ENCODE measurements at regions of chr13 and their contacts with region 1.

Region 1: GRCh38 chr13:19863323-19864023 is at the start of gene ZMYM5:
- DNase-seq: peak; percentile 97
- ATAC-seq: peak; percentile 88
- H3K4me3 ChIP-seq: peak within 1 kb of the TSS; percentile 71 to 95 (median 83)
- H3K4me3 Mint-ChIP-seq: peak within 1 kb of the TSS; percentile 93
- H3K27ac ChIP-seq: peak within 1 kb of the TSS; percentile 92 to 94
- H3K27ac Mint-ChIP-seq: peak within 1 kb of the TSS; percentile 97
- H3K4me1 ChIP-seq: peaks cover 22 to 26% of the 10 kb centered on the region in 2 donors
- H3K4me1 Mint-ChIP-seq: peaks cover 31% of the 10 kb centered on the region
- H3K27me3 ChIP-seq: no peaks in the 10 kb centered on the region
- H3K27me3 Mint-ChIP-seq: no peaks in the 10 kb centered on the region
- CTCF ChIP-seq: no peak
- total RNA-seq, gene ZMYM5: 23.0 and 26.8 TPM in 2 replicates

Region 2: GRCh38 chr13:19782049-19782726 is 81.3 kb before region 1 on chr13:
- CTCF ChIA-PET with region 1: interaction called, 7 read pairs
- POLR2A ChIA-PET with region 1: interaction called, 14 read pairs
- intact Hi-C with region 1: loop called (anchors 2 kb)
- DNase-seq: peak; percentile 71
- ATAC-seq: peak; percentile 62
- H3K4me3 ChIP-seq: peak overlapping the region; percentile 91 to 98 (median 98)
- H3K4me3 Mint-ChIP-seq: peak overlapping the region; percentile 98
- H3K27ac ChIP-seq: peak overlapping the region; percentile 88 to 92
- H3K27ac Mint-ChIP-seq: peak overlapping the region; percentile 100
- H3K4me1 ChIP-seq: peaks cover 5 to 10% of the 10 kb centered on the region in 2 donors
- H3K4me1 Mint-ChIP-seq: peaks cover 10% of the 10 kb centered on the region
- H3K27me3 ChIP-seq: no peaks in the 10 kb centered on the region
- H3K27me3 Mint-ChIP-seq: no peaks in the 10 kb centered on the region
- CTCF ChIP-seq: no peak

Region 3: GRCh38 chr13:19845758-19846157 is 17.7 kb before region 1 on chr13:
- CTCF ChIA-PET with region 1: no interaction called
- POLR2A ChIA-PET with region 1: interaction called, 12 read pairs
- intact Hi-C with region 1: no loop called
- DNase-seq: no peak
- ATAC-seq: no peak
- H3K4me3 ChIP-seq: no peak overlapping the region
- H3K4me3 Mint-ChIP-seq: no peak overlapping the region
- H3K27ac ChIP-seq: no peak overlapping the region
- H3K27ac Mint-ChIP-seq: no peak overlapping the region
- H3K4me1 ChIP-seq: no peaks in the 10 kb centered on the region
- H3K4me1 Mint-ChIP-seq: peaks cover 7% of the 10 kb centered on the region
- H3K27me3 ChIP-seq: no peaks in the 10 kb centered on the region
- H3K27me3 Mint-ChIP-seq: no peaks in the 10 kb centered on the region
- CTCF ChIP-seq: no peak

Region 4: GRCh38 chr13:19959831-19960652 is 96.6 kb after region 1 on chr13:
- CTCF ChIA-PET with region 1: interaction called, 8 read pairs
- POLR2A ChIA-PET with region 1: interaction called, 30 read pairs
- intact Hi-C with region 1: loop called (anchors 1 kb)
- DNase-seq: peak; percentile 92
- ATAC-seq: peak; percentile 44
- H3K4me3 ChIP-seq: peak overlapping the region; percentile 78 to 90 (median 85)
- H3K4me3 Mint-ChIP-seq: peak overlapping the region; percentile 99
- H3K27ac ChIP-seq: peak overlapping the region; percentile 90 to 96
- H3K27ac Mint-ChIP-seq: peak overlapping the region; percentile 99
- H3K4me1 ChIP-seq: peaks cover 8 to 15% of the 10 kb centered on the region in 2 donors
- H3K4me1 Mint-ChIP-seq: peaks cover 31% of the 10 kb centered on the region
- H3K27me3 ChIP-seq: no peaks in the 10 kb centered on the region
- H3K27me3 Mint-ChIP-seq: no peaks in the 10 kb centered on the region
- CTCF ChIP-seq: peak; percentile 87

Measured in B cell (primary cell).